Gastrocnemius medialis (tissue), 4 donors: ENCODE measurements at regions of chr1 and their contacts with region 1.

Region 1: GRCh38 chr1:117059678-117060440 is at the start of gene TTF2:
- DNase-seq: peak; percentile 94
- ATAC-seq: peak; percentile 100
- H3K4me3 ChIP-seq: peak within 1 kb of the TSS; percentile 77 to 97 (median 84)
- H3K27ac ChIP-seq: peak within 1 kb of the TSS; percentile 59 to 83 (median 74)
- H3K4me1 ChIP-seq: peaks cover 0 to 8% of the 10 kb centered on the region in 2 donors
- H3K27me3 ChIP-seq: no peaks in the 10 kb centered on the region
- CTCF ChIP-seq: peak in 3 of 5 experiments; percentile 8 to 43 (median 37)
- POLR2A ChIP-seq: peak in 1 of 2 donors; percentile 34
- total RNA-seq, gene TTF2: 9.7 to 15.2 (median 12.2) TPM

Region 2: GRCh38 chr1:116586741-116587143 is 473.1 kb before region 1 on chr1:
- in situ Hi-C with region 1: loop called in 1 of 4 experiments (anchors 10 kb)
- intact Hi-C with region 1: no loop called
- DNase-seq: no peak
- ATAC-seq: no peak
- H3K4me3 ChIP-seq: no peak overlapping the region
- H3K27ac ChIP-seq: no peak overlapping the region
- H3K4me1 ChIP-seq: no peaks in the 10 kb centered on the region
- H3K27me3 ChIP-seq: no peaks in the 10 kb centered on the region
- CTCF ChIP-seq: no peak
- POLR2A ChIP-seq: no peak

Region 3: DNA sequence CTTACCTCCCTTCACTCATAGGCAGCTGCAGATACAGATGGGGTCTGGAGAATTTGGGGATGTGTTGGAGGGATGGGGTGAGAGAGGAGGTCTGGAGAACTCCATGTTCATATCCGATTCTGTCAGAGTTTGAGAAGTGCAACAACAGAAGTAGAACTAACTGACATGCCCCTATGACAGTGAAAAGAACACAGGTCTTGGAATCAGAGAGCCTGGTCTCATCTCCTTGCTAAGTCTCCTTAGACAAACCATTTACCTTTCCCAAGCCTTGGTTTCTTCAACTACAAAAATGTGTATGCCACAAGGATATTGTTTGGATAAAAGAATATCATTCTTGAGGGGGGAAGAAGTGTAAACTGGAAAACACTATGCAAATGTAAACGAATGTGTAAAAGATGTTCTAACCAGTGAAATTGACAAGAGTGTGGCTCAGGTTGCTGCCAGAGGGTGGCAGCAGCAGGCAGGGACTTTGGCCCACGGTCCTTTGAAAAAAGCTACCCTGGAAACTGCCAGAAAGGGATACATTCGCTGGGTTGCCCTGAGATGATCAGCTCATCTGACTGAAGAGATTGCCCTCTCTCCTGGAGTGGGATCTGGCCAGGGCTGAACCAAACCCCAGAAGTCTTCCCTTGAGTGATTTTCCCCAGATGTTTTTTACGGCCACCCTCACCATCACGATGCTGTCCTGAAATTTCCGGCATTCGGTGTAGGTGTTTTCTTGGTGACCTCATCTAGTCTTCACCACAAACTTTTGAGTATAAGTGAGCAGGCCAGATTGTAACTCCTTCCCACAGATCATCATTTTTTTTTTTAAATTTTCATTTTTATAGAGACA is 322.6 kb before region 1 on chr1:
- in situ Hi-C with region 1: loop called in 2 of 4 experiments (anchors 10 kb)
- intact Hi-C with region 1: loop called (anchors 1 kb)
- DNase-seq: no peak
- ATAC-seq: no peak
- H3K4me3 ChIP-seq: no peak overlapping the region
- H3K27ac ChIP-seq: no peak overlapping the region
- H3K4me1 ChIP-seq: no peaks in the 10 kb centered on the region
- H3K27me3 ChIP-seq: no peaks in the 10 kb centered on the region
- CTCF ChIP-seq: peak in 3 of 5 experiments; percentile 43 to 54 (median 46)
- POLR2A ChIP-seq: no peak

Region 4: GRCh38 chr1:117137316-117137855 is 77.5 kb after region 1 on chr1:
- in situ Hi-C with region 1: no loop called
- intact Hi-C with region 1: no loop called
- DNase-seq: no peak
- ATAC-seq: no peak
- H3K4me3 ChIP-seq: no peak overlapping the region
- H3K27ac ChIP-seq: no peak overlapping the region
- H3K4me1 ChIP-seq: no peaks in the 10 kb centered on the region
- H3K27me3 ChIP-seq: no peaks in the 10 kb centered on the region
- CTCF ChIP-seq: no peak
- POLR2A ChIP-seq: no peak

Region 5: DNA sequence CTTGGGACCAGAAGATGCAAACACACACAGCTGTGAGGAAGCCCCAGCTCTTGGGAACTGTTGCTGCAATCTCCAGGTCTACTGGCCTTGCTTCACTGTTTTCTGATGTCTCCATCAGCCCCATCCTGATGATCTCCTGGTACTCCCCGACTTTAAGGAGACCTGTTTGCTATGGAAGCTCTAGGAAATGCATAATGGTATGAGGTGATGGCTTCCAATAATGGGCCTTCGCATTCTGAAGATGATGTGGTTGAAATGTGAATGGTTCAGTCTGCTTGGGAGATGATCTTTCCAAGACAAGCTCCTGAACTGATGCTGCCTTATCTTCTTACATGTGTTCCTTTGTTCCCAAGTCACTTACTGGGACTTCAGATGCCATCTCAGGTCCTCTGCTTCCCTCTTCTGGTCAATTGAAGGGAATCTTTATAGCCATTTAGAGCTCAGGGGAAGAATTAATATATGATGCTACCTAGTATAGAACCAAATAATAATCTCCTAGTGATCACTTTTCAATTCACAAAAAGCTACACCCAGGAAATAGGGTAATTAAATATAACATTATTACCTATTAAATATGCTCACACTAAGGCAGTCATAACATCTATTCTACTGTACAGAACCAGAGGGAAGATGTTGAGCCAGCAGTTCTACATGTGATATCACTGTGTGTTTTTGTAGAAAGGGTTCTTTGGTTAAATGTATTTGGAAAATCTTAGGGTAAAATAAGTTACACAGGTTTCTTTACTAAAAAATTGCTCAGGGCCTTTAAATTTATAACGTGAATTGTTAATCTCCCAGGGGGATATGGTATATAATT is 224.7 kb after region 1 on chr1:
- in situ Hi-C with region 1: loop called in 3 of 4 experiments (anchors 5 to 25 kb)
- intact Hi-C with region 1: no loop called
- DNase-seq: no peak
- ATAC-seq: peak; percentile 52 to 75
- H3K4me3 ChIP-seq: no peak overlapping the region
- H3K27ac ChIP-seq: no peak overlapping the region
- H3K4me1 ChIP-seq: no peaks in the 10 kb centered on the region
- H3K27me3 ChIP-seq: no peaks in the 10 kb centered on the region
- CTCF ChIP-seq: peak; percentile 27 to 43 (median 33)
- POLR2A ChIP-seq: no peak

Region 6: DNA sequence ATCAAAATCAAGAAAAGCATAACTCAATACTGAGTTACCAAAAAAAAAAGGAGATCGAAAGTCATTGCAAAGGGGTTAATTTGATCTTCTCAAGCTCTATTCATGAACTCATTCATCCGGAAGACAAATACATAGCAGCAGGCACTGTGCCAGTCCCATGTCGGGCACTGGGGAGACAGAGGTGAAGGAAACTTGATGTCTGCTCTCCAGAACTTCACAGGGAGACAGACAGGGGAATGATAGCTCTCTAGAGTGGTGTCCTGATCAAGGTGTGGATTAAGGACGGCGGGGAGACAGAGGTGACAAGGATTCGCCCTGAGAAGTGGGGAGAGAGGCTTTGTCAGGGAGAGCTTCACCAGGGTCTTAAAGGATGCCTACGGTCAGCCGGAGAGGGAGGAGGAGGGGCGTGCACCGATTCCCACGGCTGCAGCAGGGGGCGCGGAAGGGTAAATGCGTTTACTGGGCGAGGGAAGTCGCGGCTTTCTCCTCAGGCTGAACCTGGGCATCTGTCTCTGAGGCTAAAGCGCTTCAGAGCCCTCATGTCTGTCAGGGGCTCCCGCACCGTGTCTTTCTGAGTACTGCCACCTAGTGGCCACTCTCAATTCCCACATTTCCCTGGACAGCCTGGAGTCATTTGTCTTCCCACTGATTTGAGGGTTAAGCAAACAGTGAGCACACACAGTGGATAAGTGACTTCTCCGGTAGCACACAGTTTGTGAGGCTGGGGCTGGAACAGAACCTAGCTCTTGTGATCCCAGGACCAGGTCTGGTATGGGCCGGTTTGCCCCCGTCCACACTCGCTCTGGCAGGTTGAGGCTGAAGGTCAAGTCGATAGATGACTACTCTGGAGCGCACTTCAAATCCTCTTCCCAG is 698.8 kb after region 1 on chr1:
- in situ Hi-C with region 1: loop called in 1 of 4 experiments (anchors 25 kb)
- intact Hi-C with region 1: loop called (anchors 10 kb)
- DNase-seq: peak; percentile 47 to 66
- ATAC-seq: peak; percentile 95 to 96
- H3K4me3 ChIP-seq: peak overlapping the region; percentile 47 to 69 (median 54)
- H3K27ac ChIP-seq: peak overlapping the region in 1 of 4 donors; percentile 51
- H3K4me1 ChIP-seq: peaks cover 3 to 7% of the 10 kb centered on the region in 2 donors
- H3K27me3 ChIP-seq: no peaks in the 10 kb centered on the region
- CTCF ChIP-seq: peak; percentile 64 to 91 (median 84)
- POLR2A ChIP-seq: no peak